Activated T-helper 2 cell treated with anti-CD3 and anti-CD28 coated beads, Interferon-gamma antibody, Interleukin-2, Interleukin-4, amounts not matched to agents 10 μg/mL and 5 μg/mL and 100 μg/mL, durations not matched to agents 14 hours and 24 hours and 36 hours (primary cell): ENCODE measurements at regions of chr10 and their contacts with region 1.

Region 1: GRCh38 chr10:29512425-29512974 is 122.3 kb downstream of the SVIL start:
- DNase-seq: no peak
- H3K4me3 Mint-ChIP-seq: no peak overlapping the region
- H3K27ac Mint-ChIP-seq: no peak overlapping the region
- H3K4me1 Mint-ChIP-seq: peaks cover 3% of the 10 kb centered on the region
- H3K27me3 Mint-ChIP-seq: no peaks in the 10 kb centered on the region

Region 2: GRCh38 chr10:29377333-29377961 is 135.1 kb before region 1 on chr10:
- intact Hi-C with region 1: loop called (anchors 2 kb)
- DNase-seq: no peak
- H3K4me3 Mint-ChIP-seq: no peak overlapping the region
- H3K27ac Mint-ChIP-seq: no peak overlapping the region
- H3K4me1 Mint-ChIP-seq: peaks cover 4% of the 10 kb centered on the region
- H3K27me3 Mint-ChIP-seq: peaks cover 10% of the 10 kb centered on the region